ENCODE measurements at regions of chr3 and their contacts with region 1.

Region 1: GRCh38 chr3:136624894-136625815 is 127.0 kb downstream of the STAG1 start:
- DNase-seq: peak; percentile 73 to 80
- H3K4me3 ChIP-seq: no peak overlapping the region
- H3K4me3 Mint-ChIP-seq: peak overlapping the region; percentile 73
- H3K27ac Mint-ChIP-seq: peak overlapping the region; percentile 87
- H3K4me1 ChIP-seq: peaks cover 40% of the 10 kb centered on the region
- H3K4me1 Mint-ChIP-seq: peaks cover 36% of the 10 kb centered on the region
- H3K27me3 ChIP-seq: no peaks in the 10 kb centered on the region
- H3K27me3 Mint-ChIP-seq: no peaks in the 10 kb centered on the region
- CTCF ChIP-seq: no peak

Region 2: GRCh38 chr3:136584728-136585127 is 40.4 kb before region 1 on chr3:
- CTCF ChIA-PET with region 1: no interaction called
- POLR2A ChIA-PET with region 1: no interaction called
- intact Hi-C with region 1: loop called (anchors 1 kb)
- DNase-seq: no peak
- H3K4me3 ChIP-seq: no peak overlapping the region
- H3K4me3 Mint-ChIP-seq: peak overlapping the region; percentile 37
- H3K27ac Mint-ChIP-seq: peak overlapping the region; percentile 43
- H3K4me1 ChIP-seq: peaks cover 44% of the 10 kb centered on the region
- H3K4me1 Mint-ChIP-seq: peaks cover 29% of the 10 kb centered on the region
- H3K27me3 ChIP-seq: no peaks in the 10 kb centered on the region
- H3K27me3 Mint-ChIP-seq: no peaks in the 10 kb centered on the region
- CTCF ChIP-seq: no peak

Region 3: GRCh38 chr3:136612512-136612911 is 12.6 kb before region 1 on chr3:
- CTCF ChIA-PET with region 1: no interaction called
- POLR2A ChIA-PET with region 1: no interaction called
- intact Hi-C with region 1: no loop called
- DNase-seq: no peak
- H3K4me3 ChIP-seq: no peak overlapping the region
- H3K4me3 Mint-ChIP-seq: no peak overlapping the region
- H3K27ac Mint-ChIP-seq: no peak overlapping the region
- H3K4me1 ChIP-seq: peaks cover 9% of the 10 kb centered on the region; the same call in 1 of the 2 replicates
- H3K4me1 Mint-ChIP-seq: peaks cover 4% of the 10 kb centered on the region
- H3K27me3 ChIP-seq: no peaks in the 10 kb centered on the region
- H3K27me3 Mint-ChIP-seq: no peaks in the 10 kb centered on the region
- CTCF ChIP-seq: no peak

Region 4: DNA sequence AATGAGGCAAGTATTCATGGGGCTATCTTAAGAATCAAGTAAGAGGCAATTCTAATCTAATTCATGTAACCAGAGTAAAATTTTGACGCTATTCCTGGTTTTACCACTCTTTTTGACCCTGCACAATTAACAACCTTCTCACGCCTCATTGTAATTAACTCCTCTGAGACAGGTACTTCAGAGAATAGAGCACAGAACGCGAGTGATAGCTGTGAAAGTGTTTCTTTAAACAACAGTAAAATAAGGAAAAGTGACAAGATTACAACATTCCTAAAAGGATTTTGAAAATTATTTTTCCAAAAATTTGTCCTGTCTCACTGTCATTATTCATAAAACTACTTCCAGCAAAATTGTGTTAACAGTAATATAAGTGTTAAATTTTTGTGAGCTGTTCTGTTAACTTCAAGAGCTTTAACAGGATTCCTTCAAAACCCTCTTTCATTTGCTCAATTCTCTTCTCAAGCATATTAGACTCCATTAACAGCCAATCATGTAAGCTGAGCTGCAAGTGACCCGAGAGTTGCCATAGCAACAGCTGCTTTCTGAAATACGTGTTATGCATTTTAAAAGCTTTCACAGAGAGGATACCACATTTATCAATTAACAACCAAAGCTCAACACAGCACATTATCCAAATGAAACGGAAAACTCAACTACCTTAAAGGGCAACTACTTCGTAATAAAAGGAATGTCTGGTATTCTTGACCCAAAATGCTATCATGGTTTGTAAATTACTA is 34.0 kb after region 1 on chr3:
- CTCF ChIA-PET with region 1: no interaction called
- POLR2A ChIA-PET with region 1: no interaction called
- intact Hi-C with region 1: no loop called
- DNase-seq: no peak
- H3K4me3 ChIP-seq: no peak overlapping the region
- H3K4me3 Mint-ChIP-seq: no peak overlapping the region
- H3K27ac Mint-ChIP-seq: no peak overlapping the region
- H3K4me1 ChIP-seq: no peaks in the 10 kb centered on the region
- H3K4me1 Mint-ChIP-seq: no peaks in the 10 kb centered on the region
- H3K27me3 ChIP-seq: no peaks in the 10 kb centered on the region
- H3K27me3 Mint-ChIP-seq: no peaks in the 10 kb centered on the region
- CTCF ChIP-seq: no peak

Region 5: DNA sequence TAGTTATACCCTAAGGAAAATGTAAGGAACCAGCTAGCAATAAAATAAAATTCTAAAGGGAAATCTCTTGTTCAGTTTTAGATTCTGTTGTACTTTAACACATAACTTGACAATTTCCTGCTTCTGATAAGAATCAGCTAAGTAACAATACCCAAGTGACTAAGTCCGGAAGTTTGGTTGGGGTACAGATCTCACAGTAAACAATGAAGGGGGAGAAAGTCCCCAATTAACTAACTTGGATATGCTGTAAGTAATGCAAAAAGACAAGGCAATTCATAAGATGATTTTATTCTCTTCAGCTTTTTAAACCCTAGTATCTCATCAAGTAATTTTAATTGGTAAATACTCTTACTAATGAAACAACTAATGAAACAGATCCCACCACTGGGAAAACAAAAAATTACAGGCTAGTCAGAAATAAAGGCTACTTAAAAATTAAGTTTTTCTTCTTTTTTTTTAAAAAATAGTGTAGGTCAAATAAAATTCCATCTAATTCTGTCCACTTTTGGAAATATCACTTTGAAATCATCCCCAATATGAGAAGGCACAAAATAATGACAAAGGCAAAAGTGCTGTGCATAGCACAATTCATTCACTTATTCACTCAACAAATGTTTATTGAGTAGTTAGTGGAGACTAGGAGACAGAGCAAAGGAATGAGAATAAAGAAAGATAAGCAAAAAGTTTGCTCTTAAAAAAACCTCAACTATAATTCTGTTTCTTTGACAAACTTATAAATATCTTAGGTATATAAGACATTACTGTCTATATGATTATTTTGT is 294.8 kb after region 1 on chr3:
- CTCF ChIA-PET with region 1: no interaction called
- POLR2A ChIA-PET with region 1: no interaction called
- intact Hi-C with region 1: no loop called
- DNase-seq: no peak
- H3K4me3 ChIP-seq: no peak overlapping the region
- H3K4me3 Mint-ChIP-seq: no peak overlapping the region
- H3K27ac Mint-ChIP-seq: no peak overlapping the region
- H3K4me1 ChIP-seq: no peaks in the 10 kb centered on the region
- H3K4me1 Mint-ChIP-seq: peaks cover 8% of the 10 kb centered on the region
- H3K27me3 ChIP-seq: no peaks in the 10 kb centered on the region
- H3K27me3 Mint-ChIP-seq: no peaks in the 10 kb centered on the region
- CTCF ChIP-seq: no peak